ENCODE measurements at regions of chr12 and their contacts with region 1.

Region 1: DNA sequence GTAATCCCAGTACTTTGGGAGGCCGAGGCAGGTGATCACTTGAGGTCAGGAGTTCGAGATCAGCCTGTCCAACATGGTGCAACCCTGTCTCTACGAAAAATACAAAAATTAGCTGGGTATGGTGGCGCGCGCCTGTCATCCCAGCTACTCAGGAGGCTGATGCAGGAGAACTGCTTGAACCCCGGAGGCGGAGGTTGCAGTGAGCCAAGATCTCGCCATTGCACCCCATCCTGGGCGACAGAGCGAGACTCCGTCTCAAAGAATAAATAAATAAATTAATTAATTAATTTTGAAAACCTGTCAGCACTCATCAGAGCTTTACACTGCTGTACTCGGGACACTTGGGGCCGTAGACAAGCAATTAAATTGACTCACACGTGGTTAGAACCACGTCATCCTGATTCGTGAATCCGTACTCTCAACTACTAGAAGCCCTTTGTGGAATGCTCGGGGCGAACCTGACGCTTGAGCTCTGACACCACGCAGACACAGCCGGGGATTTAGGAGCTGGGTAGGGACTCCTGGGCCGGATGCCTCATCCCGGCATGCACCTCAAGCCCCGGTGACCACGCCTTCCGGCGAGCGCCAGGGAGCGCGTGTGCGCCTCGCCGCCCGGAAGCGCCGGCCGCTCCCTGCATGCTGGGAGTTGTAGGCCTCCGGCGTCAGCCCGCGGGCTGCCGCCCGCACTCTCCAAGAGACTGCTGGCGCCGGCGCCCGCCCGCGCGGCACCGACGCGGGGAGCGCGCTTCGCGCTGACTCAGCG is at the start of gene XPOT:
- DNase-seq: peak; percentile 97
- ATAC-seq: peak; percentile 90
- H3K4me3 Mint-ChIP-seq: peak within 1 kb of the TSS; percentile 97
- H3K27ac Mint-ChIP-seq: peak within 1 kb of the TSS; percentile 96
- H3K4me1 Mint-ChIP-seq: peaks cover 38% of the 10 kb centered on the region
- H3K27me3 Mint-ChIP-seq: no peaks in the 10 kb centered on the region
- total RNA-seq, gene XPOT: 179 to 187 TPM

Region 2: GRCh38 chr12:63779498-63780481 is 624.1 kb before region 1 on chr12 and contains the start of gene RXYLT1:
- CTCF ChIA-PET with region 1: no interaction called
- POLR2A ChIA-PET with region 1: no interaction called
- intact Hi-C with region 1: loop called in 1 of 2 experiments (anchors 1 kb)
- DNase-seq: peak; percentile 92
- ATAC-seq: peak; percentile 94
- H3K4me3 Mint-ChIP-seq: peak within 1 kb of the TSS; percentile 94
- H3K27ac Mint-ChIP-seq: peak within 1 kb of the TSS; percentile 95
- H3K4me1 Mint-ChIP-seq: peaks cover 10% of the 10 kb centered on the region
- H3K27me3 Mint-ChIP-seq: no peaks in the 10 kb centered on the region
- total RNA-seq, gene RXYLT1: 14.8 to 15.6 TPM

Region 3: DNA sequence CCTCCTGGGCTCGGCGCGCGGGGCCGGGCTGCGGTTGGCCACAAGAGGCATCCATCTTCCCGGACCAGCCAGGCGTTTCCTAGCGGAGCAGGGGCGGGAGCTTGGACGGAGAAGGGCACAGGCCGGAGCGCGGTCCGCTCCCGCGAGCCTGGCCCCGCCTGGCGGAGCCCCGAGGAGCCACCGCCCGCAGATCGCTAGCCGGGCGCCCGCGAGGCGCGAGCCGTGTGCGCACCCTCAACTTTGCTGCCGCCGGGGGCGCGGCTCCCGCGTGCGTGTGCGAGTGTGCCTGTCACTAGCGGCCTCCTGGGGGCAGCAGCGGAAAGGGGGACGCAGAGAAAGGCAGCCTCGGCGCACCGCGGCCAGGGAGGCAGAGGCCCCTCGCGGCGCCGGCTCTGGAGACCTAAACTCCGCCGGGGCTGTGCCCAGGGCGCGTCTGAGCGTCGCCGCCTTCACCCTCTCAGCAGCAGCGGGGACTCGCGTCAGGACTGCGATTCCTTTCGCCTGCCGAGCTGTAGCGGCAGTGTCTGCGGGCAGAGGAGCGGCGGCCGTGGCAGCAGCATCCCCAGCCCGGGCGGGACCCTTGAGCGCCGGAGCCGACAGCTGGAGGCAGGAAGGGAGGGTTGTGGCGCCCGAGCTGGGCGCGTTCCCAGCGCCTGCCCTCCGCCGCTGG is 560.0 kb before region 1 on chr12:
- CTCF ChIA-PET with region 1: no interaction called
- POLR2A ChIA-PET with region 1: no interaction called
- intact Hi-C with region 1: loop called (anchors 1 to 5 kb)
- DNase-seq: peak; percentile 89
- ATAC-seq: peak; percentile 97
- H3K4me3 Mint-ChIP-seq: peak overlapping the region; percentile 54
- H3K27ac Mint-ChIP-seq: no peak overlapping the region
- H3K4me1 Mint-ChIP-seq: peaks cover 8% of the 10 kb centered on the region
- H3K27me3 Mint-ChIP-seq: peaks cover 26% of the 10 kb centered on the region

Region 4: DNA sequence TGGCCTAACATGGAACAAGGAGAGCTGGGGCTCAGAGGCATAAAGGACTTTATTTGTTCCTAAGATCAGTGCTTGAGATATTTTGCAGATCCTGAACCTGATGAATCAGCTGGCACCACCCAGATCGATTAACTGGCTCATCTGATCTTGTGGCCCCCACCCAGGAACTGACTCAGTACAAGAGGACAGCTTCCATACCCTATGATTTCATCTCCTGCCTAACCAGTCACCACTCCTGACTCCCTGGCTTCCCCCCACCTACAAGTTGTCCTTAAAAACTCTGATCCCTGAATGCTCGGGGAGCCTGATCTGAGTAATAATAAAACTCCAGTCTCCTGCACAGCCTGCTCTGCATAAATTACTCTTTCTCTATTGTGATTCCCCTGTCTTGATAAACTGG is 18.4 kb before region 1 on chr12:
- CTCF ChIA-PET with region 1: interaction called, 3 read pairs
- POLR2A ChIA-PET with region 1: interaction called, 5 read pairs
- intact Hi-C with region 1: loop called in 1 of 2 experiments (anchors 1 kb)
- DNase-seq: peak; percentile 72
- ATAC-seq: peak; percentile 94
- H3K4me3 Mint-ChIP-seq: peak overlapping the region; percentile 34
- H3K27ac Mint-ChIP-seq: peak overlapping the region; percentile 75
- H3K4me1 Mint-ChIP-seq: peaks cover 39% of the 10 kb centered on the region
- H3K27me3 Mint-ChIP-seq: no peaks in the 10 kb centered on the region

Region 5: GRCh38 chr12:64451687-64452558 is 48.0 kb after region 1 on chr12 and contains the start of gene TBK1:
- CTCF ChIA-PET with region 1: no interaction called
- POLR2A ChIA-PET with region 1: no interaction called
- intact Hi-C with region 1: loop called (anchors 1 to 2 kb)
- DNase-seq: peak; percentile 75
- ATAC-seq: peak; percentile 64
- H3K4me3 Mint-ChIP-seq: peak within 1 kb of the TSS; percentile 89
- H3K27ac Mint-ChIP-seq: peak within 1 kb of the TSS; percentile 98
- H3K4me1 Mint-ChIP-seq: peaks cover 40% of the 10 kb centered on the region
- H3K27me3 Mint-ChIP-seq: no peaks in the 10 kb centered on the region
- total RNA-seq, gene TBK1: 14.0 to 15.4 TPM

Region 6: GRCh38 chr12:65384240-65384639 is 980.4 kb after region 1 on chr12:
- CTCF ChIA-PET with region 1: no interaction called
- POLR2A ChIA-PET with region 1: no interaction called
- intact Hi-C with region 1: no loop called
- DNase-seq: no peak
- ATAC-seq: no peak
- H3K4me3 Mint-ChIP-seq: no peak overlapping the region
- H3K27ac Mint-ChIP-seq: no peak overlapping the region
- H3K4me1 Mint-ChIP-seq: no peaks in the 10 kb centered on the region
- H3K27me3 Mint-ChIP-seq: no peaks in the 10 kb centered on the region